PC-9 (cell line): ENCODE measurements at regions of chr14 and their contacts with region 1.

Region 1: DNA sequence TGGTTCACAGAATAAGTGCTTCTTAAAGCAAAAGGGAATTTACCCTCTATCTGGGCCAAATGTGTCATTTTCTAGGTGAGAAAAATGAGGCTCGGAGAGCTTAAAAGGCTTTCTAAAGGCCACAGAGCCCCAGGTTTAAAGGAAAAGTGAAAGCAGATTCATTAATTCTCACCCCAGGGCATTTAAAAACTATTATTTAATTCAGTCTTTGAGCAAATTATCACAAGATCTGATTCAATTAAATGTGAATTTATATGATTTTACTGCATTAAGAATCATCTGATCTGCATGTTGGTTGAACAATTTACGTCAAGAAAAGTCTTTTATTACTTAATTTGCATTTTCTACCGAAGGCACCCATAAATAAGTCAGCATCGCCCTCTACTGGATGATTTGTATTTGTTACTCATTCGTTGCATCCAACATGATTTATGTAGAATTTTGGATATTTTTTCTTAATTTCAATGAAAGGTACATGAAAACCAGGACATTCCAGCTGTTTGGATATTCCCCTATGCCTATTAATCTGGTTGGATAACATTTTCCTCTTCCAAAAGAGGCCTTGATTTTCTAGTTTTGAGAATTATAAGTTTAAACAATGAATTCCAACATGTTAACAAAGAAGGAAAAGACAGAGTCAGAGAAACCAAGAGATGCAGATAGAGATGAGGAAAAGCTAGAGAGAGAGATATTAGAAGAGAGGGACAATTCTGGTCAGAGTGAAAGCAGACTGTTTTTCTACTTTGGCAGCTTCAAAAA is 19.1 kb upstream of the DHRS7 start:
- DNase-seq: peak in 1 of 2 experiments; percentile 61
- H3K4me3 ChIP-seq: peak overlapping the region; percentile 55
- H3K27ac ChIP-seq: 0 out of 2 replicates have a peak overlapping the region, but pooled peaks have one; percentile 6
- H3K4me1 ChIP-seq: peaks cover 10% of the 10 kb centered on the region; the same call in 1 of the 2 replicates
- H3K27me3 ChIP-seq: no peaks in the 10 kb centered on the region
- CTCF ChIP-seq: peak; percentile 96

Region 2: DNA sequence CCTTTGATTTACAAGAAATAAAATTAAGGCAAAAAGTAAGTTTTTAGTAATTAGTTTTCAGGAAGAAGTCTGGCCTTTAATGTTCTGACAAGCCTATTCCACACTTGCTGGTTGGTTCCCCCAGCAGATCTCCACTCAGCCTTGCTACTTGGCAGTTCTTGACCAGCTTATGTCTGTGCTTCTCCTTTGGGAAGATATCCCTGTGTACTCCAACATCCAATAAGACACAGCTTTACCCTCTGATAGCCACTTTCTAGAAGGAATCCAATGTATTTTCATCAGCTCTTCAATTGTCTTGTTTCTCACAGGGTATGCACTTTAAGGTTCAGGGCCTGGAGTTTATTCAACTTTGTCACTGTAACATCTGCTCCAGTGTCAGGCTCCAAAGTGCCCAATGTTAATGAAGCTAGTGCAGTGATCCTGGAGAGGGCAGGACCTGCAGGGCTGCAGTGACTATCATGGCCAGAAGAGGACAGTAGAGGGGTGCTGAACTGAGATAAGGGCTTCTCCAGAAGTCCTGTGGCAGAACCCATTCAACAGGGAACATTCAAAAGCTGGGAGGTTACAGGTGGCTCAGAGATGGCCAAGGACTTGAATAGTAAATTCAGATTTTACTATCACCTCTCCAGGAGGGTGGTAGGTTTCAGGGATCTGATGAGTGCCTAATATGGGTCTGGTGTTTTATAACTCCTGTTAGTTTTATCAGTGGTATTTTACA is 677.1 kb before region 1 on chr14:
- CTCF ChIA-PET with region 1: no interaction called
- POLR2A ChIA-PET with region 1: no interaction called
- intact Hi-C with region 1: loop called (anchors 10 kb)
- DNase-seq: peak; percentile 35 to 39
- H3K4me3 ChIP-seq: no peak overlapping the region
- H3K27ac ChIP-seq: no peak overlapping the region
- H3K4me1 ChIP-seq: no peaks in the 10 kb centered on the region
- H3K27me3 ChIP-seq: no peaks in the 10 kb centered on the region
- CTCF ChIP-seq: peak; percentile 66

Region 3: DNA sequence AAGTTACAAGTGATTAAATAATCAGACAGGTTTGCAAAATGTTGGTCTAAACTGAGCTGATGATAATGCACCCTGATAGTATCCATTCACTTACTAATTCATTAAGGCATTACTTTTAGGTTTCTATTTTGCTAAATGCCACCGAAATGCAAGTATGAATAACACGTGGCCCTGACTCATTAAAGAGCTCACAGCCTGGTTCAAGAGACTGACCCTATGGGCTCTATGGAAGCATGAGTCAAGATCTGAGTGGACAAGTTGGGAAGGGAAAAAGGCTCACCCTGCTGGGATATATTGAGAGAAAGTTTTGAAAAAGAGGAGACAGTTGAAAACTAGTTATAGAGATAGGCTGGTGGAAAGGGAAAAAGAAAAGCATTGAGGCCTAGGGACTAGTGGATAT is 279.1 kb before region 1 on chr14:
- CTCF ChIA-PET with region 1: interaction called, 10 read pairs
- POLR2A ChIA-PET with region 1: no interaction called
- intact Hi-C with region 1: no loop called
- DNase-seq: no peak
- H3K4me3 ChIP-seq: no peak overlapping the region
- H3K27ac ChIP-seq: no peak overlapping the region
- H3K4me1 ChIP-seq: no peaks in the 10 kb centered on the region
- H3K27me3 ChIP-seq: no peaks in the 10 kb centered on the region
- CTCF ChIP-seq: no peak

Region 4: DNA sequence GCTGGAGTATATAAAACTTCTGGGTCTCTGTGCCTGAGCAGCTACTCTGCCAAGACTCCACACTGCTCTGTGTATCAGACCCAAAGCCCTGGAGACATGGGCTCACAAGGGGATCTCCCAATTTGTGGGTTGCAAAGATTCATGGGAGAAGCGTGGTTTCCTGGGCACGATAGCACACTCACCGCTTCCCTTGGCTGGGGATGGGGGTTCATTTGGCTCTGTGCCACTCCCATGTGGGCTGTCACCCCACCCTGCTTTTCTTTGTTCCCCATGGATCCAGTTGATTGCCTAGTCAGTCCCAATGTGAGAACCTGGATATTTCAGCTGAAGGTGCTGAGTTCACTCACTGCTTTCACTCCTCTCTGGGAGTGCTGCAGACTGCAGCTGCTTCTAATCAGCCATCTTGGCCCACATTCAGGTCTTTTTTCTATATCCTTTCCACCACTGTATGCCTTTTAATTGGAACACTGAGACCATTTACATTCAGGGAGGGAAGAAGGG is 132.6 kb before region 1 on chr14:
- CTCF ChIA-PET with region 1: no interaction called
- POLR2A ChIA-PET with region 1: interaction called, 13 read pairs
- intact Hi-C with region 1: no loop called
- DNase-seq: no peak
- H3K4me3 ChIP-seq: no peak overlapping the region
- H3K27ac ChIP-seq: no peak overlapping the region
- H3K4me1 ChIP-seq: no peaks in the 10 kb centered on the region
- H3K27me3 ChIP-seq: 0 out of 2 replicates have a peak, but pooled peaks cover 6% of the 10 kb centered on the region
- CTCF ChIP-seq: no peak

Region 5: DNA sequence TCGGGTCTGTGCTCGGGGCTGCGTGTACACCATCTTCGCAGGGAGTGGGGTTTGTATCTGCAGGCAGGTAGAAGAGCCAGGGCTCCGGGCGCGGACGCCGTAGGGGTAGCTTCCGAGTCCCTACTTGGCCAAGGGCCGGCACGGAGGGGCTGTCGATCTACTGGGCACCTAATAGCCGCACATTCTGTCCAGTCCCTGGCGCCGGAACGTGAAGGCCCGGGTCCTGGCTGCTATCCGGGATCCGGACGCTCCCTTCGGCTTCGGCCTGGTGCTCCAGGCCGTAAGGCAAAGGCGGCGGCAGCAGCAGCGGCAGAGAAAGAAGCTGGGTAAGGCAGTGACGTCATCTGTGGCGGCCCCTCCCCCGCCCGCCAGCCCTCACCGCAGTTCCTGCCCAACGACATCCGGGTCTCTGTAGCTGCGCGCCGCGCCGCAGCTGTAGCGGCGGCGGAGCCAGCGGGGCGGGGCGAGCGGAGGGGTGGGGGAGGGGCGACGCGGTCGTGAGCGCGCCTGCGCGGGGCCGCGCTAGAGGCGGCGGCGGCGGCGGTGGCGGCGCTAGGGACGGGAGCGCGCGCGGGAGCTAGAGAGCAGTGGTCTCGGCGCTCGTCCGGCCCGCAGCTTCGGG is 64.5 kb after region 1 on chr14 and contains the start of gene PPM1A:
- CTCF ChIA-PET with region 1: interaction called, 12 read pairs
- POLR2A ChIA-PET with region 1: interaction called, 6 read pairs
- intact Hi-C with region 1: no loop called
- DNase-seq: peak; percentile 88 to 95
- H3K4me3 ChIP-seq: peak within 1 kb of the TSS; percentile 63
- H3K27ac ChIP-seq: peak within 1 kb of the TSS; percentile 89
- H3K4me1 ChIP-seq: peaks cover 24% of the 10 kb centered on the region
- H3K27me3 ChIP-seq: no peaks in the 10 kb centered on the region
- CTCF ChIP-seq: no peak
- total RNA-seq, gene PPM1A: 60.9 and 62.2 TPM in 2 replicates

Region 6: GRCh38 chr14:60485598-60486251 is 301.4 kb after region 1 on chr14 and contains the start of gene C14orf39:
- CTCF ChIA-PET with region 1: no interaction called
- POLR2A ChIA-PET with region 1: no interaction called
- intact Hi-C with region 1: loop called (anchors 5 kb)
- DNase-seq: no peak
- H3K4me3 ChIP-seq: no peak within 1 kb of the TSS
- H3K27ac ChIP-seq: no peak within 1 kb of the TSS
- H3K4me1 ChIP-seq: no peaks in the 10 kb centered on the region
- H3K27me3 ChIP-seq: no peaks in the 10 kb centered on the region
- CTCF ChIP-seq: no peak
- total RNA-seq, gene C14orf39: not detected in 2 replicates